Gastrocnemius medialis (tissue), 4 donors: ENCODE measurements at regions of chr9 and their contacts with region 1.

Region 1: DNA sequence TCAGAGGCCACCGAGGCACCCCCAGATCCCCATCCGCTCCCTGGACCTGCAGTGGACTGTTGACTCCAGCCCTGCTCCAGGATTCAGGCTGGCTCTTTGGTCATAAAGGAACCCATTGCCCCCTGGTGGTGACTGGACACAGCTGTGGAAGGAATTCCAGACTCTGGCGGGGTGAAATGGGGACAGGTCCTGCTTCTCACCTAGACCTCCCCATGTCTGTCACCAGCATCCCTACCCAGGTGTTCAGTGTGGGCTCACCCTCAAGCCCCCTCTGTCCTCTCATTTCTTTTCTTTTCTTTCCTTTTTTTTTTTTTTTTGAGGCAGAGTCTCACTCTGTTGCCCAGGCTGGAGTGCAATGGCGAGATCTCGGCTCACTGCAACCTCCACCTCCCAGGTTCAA is 25.5 kb upstream of the STXBP1 start:
- DNase-seq: peak; percentile 68 to 69
- ATAC-seq: peak; percentile 82 to 90
- H3K4me3 ChIP-seq: no peak overlapping the region
- H3K27ac ChIP-seq: no peak overlapping the region
- H3K4me1 ChIP-seq: no peaks in the 10 kb centered on the region
- H3K27me3 ChIP-seq: no peaks in the 10 kb centered on the region
- CTCF ChIP-seq: peak; percentile 77 to 86 (median 84)
- POLR2A ChIP-seq: no peak

Region 2: GRCh38 chr9:127489471-127490115 is 96.9 kb before region 1 on chr9:
- in situ Hi-C with region 1: no loop called
- intact Hi-C with region 1: no loop called
- DNase-seq: no peak
- ATAC-seq: no peak
- H3K4me3 ChIP-seq: no peak overlapping the region
- H3K27ac ChIP-seq: no peak overlapping the region
- H3K4me1 ChIP-seq: no peaks in the 10 kb centered on the region
- H3K27me3 ChIP-seq: no peaks in the 10 kb centered on the region
- CTCF ChIP-seq: no peak
- POLR2A ChIP-seq: no peak

Region 3: DNA sequence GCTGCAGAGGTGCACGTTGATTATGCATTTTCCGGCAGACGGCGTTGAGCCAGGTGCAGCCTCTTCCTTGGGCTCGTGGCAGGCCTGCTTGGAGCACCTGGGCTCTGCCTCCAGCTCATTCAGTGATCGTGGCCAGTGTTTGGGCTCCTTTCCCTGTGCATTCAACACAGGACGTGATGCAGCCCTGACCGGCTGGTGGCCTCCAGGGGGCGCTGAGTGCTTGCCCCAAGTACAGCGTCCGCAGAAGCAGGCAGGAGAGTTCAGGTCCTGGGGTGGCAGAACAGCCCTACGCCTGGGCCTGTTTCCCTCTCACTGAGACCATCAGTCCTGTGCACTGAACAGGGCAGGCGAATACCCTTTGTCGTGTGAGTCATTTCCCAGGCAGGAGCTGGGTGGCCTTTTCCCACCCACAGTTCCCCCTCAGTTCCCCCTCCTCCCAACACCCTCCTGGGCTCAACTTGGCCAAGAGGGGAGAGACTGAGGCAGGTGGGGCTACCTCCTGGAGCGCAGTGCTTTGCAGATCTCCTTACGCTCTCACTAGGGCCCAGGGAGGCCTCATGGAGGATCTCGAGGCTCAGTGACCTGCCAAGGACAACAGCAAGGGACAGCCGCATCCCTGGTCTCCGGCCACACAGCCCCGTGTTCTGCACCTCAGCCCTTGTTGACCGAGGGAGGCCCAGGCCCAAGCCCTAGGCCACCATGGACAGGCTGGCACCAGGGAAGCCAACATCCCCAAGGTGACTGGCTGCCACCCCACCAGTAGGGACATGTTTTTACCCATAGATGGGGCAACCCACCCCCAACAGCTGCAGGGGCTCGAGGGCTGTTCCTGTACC is 82.4 kb before region 1 on chr9:
- in situ Hi-C with region 1: loop called in 3 of 4 experiments (anchors 5 kb)
- intact Hi-C with region 1: loop called (anchors 1 kb)
- DNase-seq: peak; percentile 53 to 73
- ATAC-seq: peak; percentile 74 to 85
- H3K4me3 ChIP-seq: no peak overlapping the region
- H3K27ac ChIP-seq: peak overlapping the region in 1 of 4 donors; percentile 20
- H3K4me1 ChIP-seq: no peaks in the 10 kb centered on the region
- H3K27me3 ChIP-seq: no peaks in the 10 kb centered on the region
- CTCF ChIP-seq: peak; percentile 75 to 92 (median 86)
- POLR2A ChIP-seq: no peak

Region 4: GRCh38 chr9:127509962-127510313 is 76.6 kb before region 1 on chr9:
- in situ Hi-C with region 1: loop called in 1 of 4 experiments (anchors 5 kb)
- intact Hi-C with region 1: no loop called
- DNase-seq: no peak
- ATAC-seq: no peak
- H3K4me3 ChIP-seq: no peak overlapping the region
- H3K27ac ChIP-seq: peak overlapping the region in 3 of 4 donors; percentile 29 to 59 (median 40)
- H3K4me1 ChIP-seq: no peaks in the 10 kb centered on the region
- H3K27me3 ChIP-seq: no peaks in the 10 kb centered on the region
- CTCF ChIP-seq: no peak
- POLR2A ChIP-seq: no peak

Region 5: DNA sequence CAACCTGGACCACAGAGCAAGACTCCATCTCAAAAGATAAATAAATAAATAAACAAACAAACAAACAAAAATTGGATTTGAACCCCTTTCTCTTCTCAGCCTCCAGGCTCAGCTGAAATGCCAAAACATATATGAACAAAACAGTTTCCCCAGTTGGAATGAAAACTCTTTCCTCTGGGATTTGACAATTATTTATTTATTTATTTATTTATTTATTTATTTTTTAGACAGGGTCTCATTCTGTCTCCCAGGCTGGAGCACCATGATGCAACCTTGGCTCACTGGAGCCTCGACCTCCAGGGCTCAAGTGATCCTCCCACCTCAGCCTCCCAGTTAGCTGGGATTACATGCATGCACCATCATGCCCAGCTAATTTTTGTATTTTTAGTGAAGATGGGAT is 19.5 kb after region 1 on chr9:
- in situ Hi-C with region 1: no loop called
- intact Hi-C with region 1: loop called (anchors 2 kb)
- DNase-seq: no peak
- ATAC-seq: no peak
- H3K4me3 ChIP-seq: no peak overlapping the region
- H3K27ac ChIP-seq: peak overlapping the region in 1 of 4 donors; percentile 82
- H3K4me1 ChIP-seq: peaks cover 23 to 24% of the 10 kb centered on the region in 2 donors
- H3K27me3 ChIP-seq: no peaks in the 10 kb centered on the region
- CTCF ChIP-seq: no peak
- POLR2A ChIP-seq: no peak

Region 6: DNA sequence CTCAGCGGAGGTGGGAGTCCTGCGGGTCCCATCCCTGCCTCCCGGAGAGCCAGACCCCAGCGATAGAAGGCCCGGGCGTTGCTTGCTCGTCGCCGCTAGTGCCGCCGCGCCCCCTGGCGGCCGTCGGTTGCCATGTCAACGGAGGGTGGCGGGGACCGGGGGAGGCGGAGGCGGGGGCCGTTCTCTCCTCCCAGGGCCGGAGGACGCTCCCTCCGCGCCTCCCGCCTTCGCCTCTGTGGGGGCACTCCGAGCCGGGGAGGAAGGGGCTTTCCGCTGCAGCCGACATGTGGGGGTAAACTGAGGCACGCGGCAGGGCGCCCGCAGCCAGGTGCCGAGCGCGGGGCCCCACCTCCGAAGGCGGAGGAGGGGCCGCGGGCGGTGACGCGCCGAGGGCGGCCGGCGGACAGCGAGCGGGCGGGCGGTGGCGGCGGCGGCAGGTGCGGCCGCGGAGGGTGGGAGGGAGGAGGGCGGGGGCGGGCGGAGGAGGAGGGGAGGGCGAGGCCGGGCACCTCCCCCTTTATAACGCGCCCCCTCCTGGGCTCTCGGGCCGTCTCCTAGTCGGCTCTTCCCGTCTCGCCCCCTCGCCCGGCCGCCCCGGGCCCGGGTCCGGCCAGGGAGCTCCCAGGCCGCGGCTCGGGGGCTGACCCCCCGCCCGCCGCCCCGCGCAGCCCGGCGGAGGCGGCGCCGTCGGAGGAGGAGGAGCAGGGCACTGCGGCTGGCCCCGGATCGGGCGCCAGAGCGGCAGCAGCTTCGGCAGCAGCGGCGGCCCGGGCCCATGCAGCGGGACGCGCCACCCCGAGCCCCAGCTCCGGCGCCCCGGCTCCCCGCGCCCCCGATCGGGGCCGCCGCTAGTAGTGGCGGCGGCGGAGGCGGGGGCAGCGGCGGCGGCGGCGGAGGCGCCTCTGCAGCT is 198.7 kb after region 1 on chr9:
- in situ Hi-C with region 1: no loop called
- intact Hi-C with region 1: loop called (anchors 1 kb)
- DNase-seq: peak; percentile 73 to 84
- ATAC-seq: peak; percentile 80
- H3K4me3 ChIP-seq: peak overlapping the region; percentile 59 to 100 (median 92)
- H3K27ac ChIP-seq: peak overlapping the region; percentile 89 to 98 (median 96)
- H3K4me1 ChIP-seq: peaks cover 7 to 12% of the 10 kb centered on the region in 2 donors
- H3K27me3 ChIP-seq: no peaks in the 10 kb centered on the region
- CTCF ChIP-seq: peak; percentile 79 to 99 (median 99)
- POLR2A ChIP-seq: no peak

Region 7: DNA sequence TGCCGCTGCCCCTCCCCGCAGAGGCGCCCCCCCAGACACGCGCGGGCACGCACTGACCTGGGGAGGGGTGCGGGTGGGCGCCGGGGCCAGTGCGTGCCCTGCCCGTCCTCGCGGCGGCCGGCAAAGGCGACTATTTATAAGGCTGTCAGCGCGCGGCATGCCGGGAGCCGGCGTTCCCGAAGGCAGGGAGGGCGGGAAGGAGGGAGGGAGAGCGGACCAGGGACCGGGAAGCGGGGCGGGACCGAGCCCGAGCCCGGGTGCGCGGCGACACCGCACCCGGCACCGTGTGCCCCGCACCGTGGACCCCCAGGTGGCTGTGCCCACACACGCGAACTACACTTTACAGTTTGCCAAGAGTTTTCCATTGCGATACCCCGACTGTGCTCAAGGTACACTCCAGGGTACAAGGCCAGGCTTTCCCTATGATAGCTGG is 291.0 kb after region 1 on chr9 and contains the start of gene AK1:
- in situ Hi-C with region 1: no loop called
- intact Hi-C with region 1: loop called (anchors 5 kb)
- DNase-seq: peak; percentile 75 to 83
- ATAC-seq: peak; percentile 68 to 70
- H3K4me3 ChIP-seq: peak within 1 kb of the TSS; percentile 60 to 74 (median 68)
- H3K27ac ChIP-seq: peak within 1 kb of the TSS; percentile 86 to 96 (median 91)
- H3K4me1 ChIP-seq: peaks cover 47 to 48% of the 10 kb centered on the region in 2 donors
- H3K27me3 ChIP-seq: no peaks in the 10 kb centered on the region
- CTCF ChIP-seq: no peak
- POLR2A ChIP-seq: peak; percentile 74 to 90
- total RNA-seq, gene AK1: 240 to 489 (median 359) TPM